Transverse colon (tissue), 4 donors: ENCODE measurements at regions of chr21 and their contacts with region 1.

Region 1: DNA sequence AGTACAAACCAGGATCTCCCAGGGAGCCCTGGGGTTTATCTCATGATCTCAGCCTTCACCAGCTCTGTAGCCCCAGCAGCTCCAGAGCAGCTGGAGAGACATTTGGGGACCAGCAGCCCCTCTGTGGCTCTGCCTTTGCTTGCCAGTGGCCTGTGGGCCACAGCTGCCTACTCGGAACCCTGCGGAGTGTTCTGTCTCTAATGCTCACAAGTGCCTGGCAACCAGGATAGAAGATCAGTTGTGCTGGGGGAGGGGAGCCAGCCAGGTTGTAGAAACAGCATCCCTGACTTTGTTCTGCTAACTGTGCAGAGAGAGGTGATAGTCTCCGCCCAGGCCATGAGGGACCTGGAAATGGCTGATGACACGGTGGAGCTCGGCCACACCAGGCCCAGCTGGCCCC is 50.9 kb upstream of the KCNJ15 start:
- DNase-seq: no peak
- H3K4me3 ChIP-seq: no peak overlapping the region
- H3K27ac ChIP-seq: no peak overlapping the region
- H3K4me1 ChIP-seq: no peaks in the 10 kb centered on the region
- H3K27me3 ChIP-seq: peaks cover 49% of the 10 kb centered on the region
- CTCF ChIP-seq: no peak
- EP300 ChIP-seq: no peak
- POLR2A ChIP-seq: no peak

Region 2: DNA sequence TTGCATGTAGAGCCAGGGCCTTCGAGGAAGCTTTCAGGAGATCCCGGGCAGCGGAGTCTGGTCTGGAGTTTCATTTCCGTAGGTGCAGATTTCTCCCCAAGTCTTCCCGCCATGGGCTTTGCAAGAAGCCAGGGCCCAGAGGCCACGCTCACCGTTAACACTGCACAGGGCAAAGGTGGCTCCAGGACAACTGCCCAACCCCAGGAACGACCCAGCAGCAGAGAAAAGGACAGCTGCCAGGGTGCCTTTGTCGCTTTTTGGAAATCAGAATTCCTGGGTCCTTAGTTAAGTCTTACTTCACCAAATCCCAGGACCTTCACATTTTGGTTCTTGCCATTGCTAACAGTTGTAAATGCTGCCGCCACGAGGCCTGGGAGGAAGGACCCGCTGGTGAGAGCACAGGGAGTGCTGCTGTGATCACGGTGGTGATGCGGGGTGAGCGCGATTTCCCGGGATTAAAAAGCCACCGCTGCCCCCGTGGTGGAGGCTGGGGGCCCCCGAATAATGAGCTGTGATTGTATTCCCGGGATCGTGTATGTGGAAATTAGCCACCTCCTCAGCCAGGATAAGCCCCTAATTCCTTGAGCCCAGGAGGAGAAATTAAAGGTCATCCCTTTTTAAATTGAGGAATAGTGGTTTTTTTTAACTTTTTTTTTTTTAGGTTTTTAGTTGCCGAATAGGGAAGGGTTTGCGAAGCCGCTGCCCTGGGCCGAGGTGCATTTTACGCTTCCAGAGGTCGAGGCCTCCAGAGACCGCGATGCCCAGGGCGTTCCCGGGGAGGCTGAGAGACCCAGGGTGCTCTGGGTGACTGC is 1498.8 kb before region 1 on chr21:
- in situ Hi-C with region 1: no loop called
- intact Hi-C with region 1: loop called (anchors 10 kb)
- DNase-seq: no peak
- H3K4me3 ChIP-seq: no peak overlapping the region
- H3K27ac ChIP-seq: no peak overlapping the region
- H3K4me1 ChIP-seq: peaks cover 13 to 57% (median 34%) of the 10 kb centered on the region in 4 donors
- H3K27me3 ChIP-seq: peaks cover 100% of the 10 kb centered on the region
- CTCF ChIP-seq: no peak
- EP300 ChIP-seq: no peak
- POLR2A ChIP-seq: no peak